Aorta (tissue), 5 donors: ENCODE measurements at regions of chr1 and their contacts with region 1.

Region 1: GRCh38 chr1:221435504-221435904 is 306.4 kb downstream of the DUSP10 start:
- DNase-seq: no peak
- ATAC-seq: peak; percentile 84
- H3K4me3 ChIP-seq: no peak overlapping the region
- H3K27ac ChIP-seq: no peak overlapping the region
- H3K4me1 ChIP-seq: peaks cover 0 to 5% of the 10 kb centered on the region in 2 donors
- H3K27me3 ChIP-seq: no peaks in the 10 kb centered on the region

Region 2: DNA sequence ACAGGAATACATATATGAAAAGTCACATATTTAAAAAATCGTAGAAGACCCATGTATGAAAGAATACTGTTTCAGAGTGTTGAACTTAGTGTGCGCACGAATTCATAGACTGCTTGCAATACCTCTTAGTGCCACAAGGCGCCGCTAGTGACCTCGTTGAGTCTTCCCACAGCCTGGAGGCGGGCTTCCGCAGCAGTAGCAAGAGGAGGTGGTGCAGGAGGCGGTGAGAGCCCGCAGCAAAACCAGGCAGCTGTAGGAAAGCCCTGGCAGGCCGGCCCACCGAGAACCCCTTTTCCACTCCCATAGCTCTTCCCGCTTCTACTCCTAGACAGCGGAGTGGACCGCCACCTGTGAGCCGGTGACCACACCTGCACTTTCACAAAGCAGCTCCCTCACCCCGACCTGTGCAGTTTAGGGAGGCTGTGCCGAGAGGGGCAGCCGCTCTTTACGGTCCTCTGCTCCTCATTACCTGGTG is 625.3 kb before region 1 on chr1:
- intact Hi-C with region 1: loop called (anchors 5 kb)
- DNase-seq: peak; percentile 89 to 93
- ATAC-seq: peak; percentile 94
- H3K4me3 ChIP-seq: no peak overlapping the region
- H3K27ac ChIP-seq: no peak overlapping the region
- H3K4me1 ChIP-seq: no peaks in the 10 kb centered on the region
- H3K27me3 ChIP-seq: no peaks in the 10 kb centered on the region

Region 3: GRCh38 chr1:220873868-220874655 is 561.4 kb before region 1 on chr1:
- intact Hi-C with region 1: loop called (anchors 5 kb)
- DNase-seq: no peak
- ATAC-seq: peak; percentile 56
- H3K4me3 ChIP-seq: no peak overlapping the region
- H3K27ac ChIP-seq: no peak overlapping the region
- H3K4me1 ChIP-seq: no peaks in the 10 kb centered on the region
- H3K27me3 ChIP-seq: no peaks in the 10 kb centered on the region

Region 4: DNA sequence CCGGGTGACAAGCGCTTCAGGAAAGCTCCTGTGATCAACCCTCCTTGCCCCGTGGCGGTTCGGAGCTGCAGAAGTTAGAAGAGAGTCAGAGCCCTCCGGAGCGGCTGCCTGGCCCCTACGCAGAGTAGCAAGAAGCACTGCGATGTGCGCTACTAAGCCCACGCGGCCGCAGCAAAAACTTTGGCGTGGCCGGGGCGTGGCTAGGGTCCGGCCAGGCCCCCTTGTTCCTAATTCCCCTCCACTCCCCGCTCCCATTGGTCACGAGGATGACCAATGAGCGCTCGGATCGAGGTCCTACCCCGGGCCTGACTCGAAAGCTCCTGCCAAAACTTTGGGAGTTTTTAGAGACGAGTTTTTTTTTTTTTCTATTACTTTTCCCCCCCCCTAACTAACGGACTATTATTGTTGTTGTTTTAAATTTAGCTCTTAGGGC is 556.4 kb before region 1 on chr1 and contains the start of gene HLX:
- intact Hi-C with region 1: loop called (anchors 5 kb)
- DNase-seq: peak; percentile 97
- ATAC-seq: peak; percentile 95
- H3K4me3 ChIP-seq: peak within 1 kb of the TSS; percentile 72 to 84
- H3K27ac ChIP-seq: peak within 1 kb of the TSS in 1 of 2 donors; percentile 60
- H3K4me1 ChIP-seq: no peaks in the 10 kb centered on the region
- H3K27me3 ChIP-seq: no peaks in the 10 kb centered on the region
- total RNA-seq, gene HLX: 13.1 to 21.6 TPM

Region 5: DNA sequence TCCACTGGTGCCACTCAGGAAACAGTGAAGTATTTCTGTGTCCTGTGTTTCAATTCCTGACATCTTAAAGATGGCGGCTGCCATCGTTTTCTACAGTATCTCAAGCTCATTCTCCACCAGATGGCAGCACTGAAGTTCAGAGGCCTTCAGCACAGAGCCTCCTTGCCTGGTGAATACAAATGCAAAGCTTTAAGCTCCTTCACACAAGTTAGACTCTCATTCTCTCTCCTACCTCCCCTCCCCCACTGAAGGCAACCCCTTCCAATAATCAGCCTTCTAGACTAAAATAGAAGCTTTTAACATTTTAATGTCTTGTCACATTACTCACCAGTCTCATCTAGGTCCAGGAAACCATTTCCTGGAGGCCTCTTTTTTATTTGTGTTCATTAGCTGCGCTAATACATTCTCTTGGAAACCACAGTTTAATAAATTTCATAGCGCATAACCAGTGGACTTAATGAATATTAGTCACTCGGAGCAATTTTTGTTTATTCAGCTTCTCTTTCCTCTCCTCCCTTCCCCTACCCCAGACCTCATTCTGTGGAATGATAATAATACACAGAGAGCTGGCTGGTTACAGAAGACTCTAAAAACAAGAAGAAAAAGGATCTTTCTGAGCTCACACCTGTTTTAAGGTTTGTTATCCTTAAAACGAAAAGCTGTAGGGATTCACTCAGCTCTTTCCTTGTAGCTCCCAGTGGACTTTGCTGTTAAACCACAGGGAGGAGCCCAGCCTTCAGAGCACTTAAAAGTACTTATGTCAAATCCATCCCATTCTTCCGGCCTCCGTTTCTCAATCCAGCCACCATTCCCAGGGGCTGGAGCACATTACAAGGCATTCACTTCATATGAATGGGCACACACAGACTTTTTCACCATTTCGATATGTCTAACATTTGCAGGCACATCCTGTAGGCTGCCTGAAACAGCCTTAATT is 171.4 kb before region 1 on chr1:
- intact Hi-C with region 1: loop called (anchors 2 to 5 kb)
- DNase-seq: peak in 1 of 2 donors; percentile 64
- ATAC-seq: peak; percentile 78
- H3K4me3 ChIP-seq: no peak overlapping the region
- H3K27ac ChIP-seq: no peak overlapping the region
- H3K4me1 ChIP-seq: no peaks in the 10 kb centered on the region
- H3K27me3 ChIP-seq: no peaks in the 10 kb centered on the region